WTC11 (cell line): ENCODE measurements at regions of chr15 and their contacts with region 1.

Region 1: DNA sequence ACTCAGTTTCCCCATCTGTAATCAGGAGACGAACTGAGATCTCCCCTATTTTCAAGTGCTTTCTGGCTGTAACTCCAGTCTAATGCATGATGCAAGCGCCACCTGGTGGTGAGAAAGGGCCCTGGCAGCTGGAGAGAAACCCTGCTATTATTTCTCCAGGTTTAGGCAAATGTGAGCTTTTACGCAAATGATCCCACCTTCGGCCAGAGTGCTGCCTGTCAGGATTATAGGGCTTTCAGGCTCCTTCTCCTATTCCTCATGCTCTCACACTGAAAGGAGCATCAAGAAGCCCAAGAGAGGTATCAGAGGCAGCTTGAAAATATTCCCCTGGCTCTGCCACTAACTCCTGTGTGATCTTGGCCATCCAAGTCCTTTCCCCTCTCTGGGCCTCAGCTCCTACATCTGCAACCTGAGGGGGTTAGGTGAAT is 93.9 kb upstream of the RASGRF1 start:
- DNase-seq: peak; percentile 80
- ATAC-seq: peak; percentile 75
- H3K4me3 Mint-ChIP-seq: no peak overlapping the region
- H3K27ac Mint-ChIP-seq: no peak overlapping the region
- H3K4me1 Mint-ChIP-seq: peaks cover 4% of the 10 kb centered on the region
- H3K27me3 Mint-ChIP-seq: peaks cover 12% of the 10 kb centered on the region
- CTCF ChIP-seq: peak; percentile 90

Region 2: DNA sequence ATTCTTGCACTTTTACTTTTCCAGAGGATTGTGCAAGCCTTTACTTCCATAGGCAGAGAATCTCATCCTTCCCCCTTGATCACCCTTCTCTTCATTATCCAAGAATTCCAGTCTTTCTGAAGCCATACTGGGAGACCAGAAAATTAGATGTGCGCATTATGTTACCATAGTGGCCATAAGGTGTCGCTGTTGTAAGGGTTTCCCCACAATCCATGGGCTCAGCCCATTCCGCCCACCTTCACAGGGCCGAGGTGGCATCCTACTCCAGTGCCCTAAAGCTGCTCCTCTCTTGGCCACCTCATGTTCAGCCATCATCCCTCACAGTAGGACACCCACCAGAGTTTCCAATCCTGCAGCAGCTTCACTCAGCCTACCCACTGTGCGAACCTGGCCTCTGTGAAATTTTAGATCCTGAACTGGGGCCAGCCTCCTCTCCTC is 274.7 kb before region 1 on chr15:
- CTCF ChIA-PET with region 1: interaction called, 23 read pairs
- POLR2A ChIA-PET with region 1: no interaction called
- DNase-seq: peak; percentile 65
- ATAC-seq: peak; percentile 79
- H3K4me3 Mint-ChIP-seq: no peak overlapping the region
- H3K27ac Mint-ChIP-seq: peak overlapping the region; percentile 89
- H3K4me1 Mint-ChIP-seq: peaks cover 26% of the 10 kb centered on the region
- H3K27me3 Mint-ChIP-seq: no peaks in the 10 kb centered on the region
- CTCF ChIP-seq: peak; percentile 70

Region 3: GRCh38 chr15:78968539-78969271 is 215.8 kb before region 1 on chr15:
- CTCF ChIA-PET with region 1: no interaction called
- POLR2A ChIA-PET with region 1: no interaction called
- DNase-seq: no peak
- ATAC-seq: no peak
- H3K4me3 Mint-ChIP-seq: peak overlapping the region; percentile 45
- H3K27ac Mint-ChIP-seq: peak overlapping the region; percentile 94
- H3K4me1 Mint-ChIP-seq: peaks cover 44% of the 10 kb centered on the region
- H3K27me3 Mint-ChIP-seq: no peaks in the 10 kb centered on the region
- CTCF ChIP-seq: no peak

Region 4: DNA sequence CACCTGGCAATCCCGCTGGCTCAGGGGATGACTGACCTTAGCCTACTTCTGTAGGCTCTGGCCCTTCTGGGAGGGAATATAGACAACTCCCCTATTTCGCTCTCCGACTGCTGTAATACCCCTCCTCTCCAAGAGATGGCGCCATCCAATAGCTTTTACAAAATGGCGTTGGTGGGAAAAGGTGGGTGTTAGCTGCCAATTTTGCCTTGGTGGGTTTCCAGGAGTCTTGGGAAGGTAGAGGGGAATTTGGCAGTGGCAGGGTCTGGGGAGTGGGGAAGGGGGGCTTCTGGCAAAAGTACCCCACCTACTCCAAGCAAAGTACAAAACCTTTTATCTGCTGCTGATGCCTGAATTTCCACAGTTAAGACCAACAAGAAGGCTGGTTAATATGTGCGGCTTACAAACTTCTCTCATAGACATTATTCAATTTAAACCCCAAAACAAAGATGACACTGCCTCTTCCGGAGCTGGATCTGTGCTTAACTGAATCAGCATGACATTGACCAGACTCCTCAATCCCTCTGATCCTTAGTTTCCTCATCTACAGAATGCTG is 156.0 kb before region 1 on chr15:
- CTCF ChIA-PET with region 1: interaction called, 276 read pairs
- POLR2A ChIA-PET with region 1: interaction called, 3 read pairs
- DNase-seq: peak; percentile 75
- ATAC-seq: peak; percentile 65
- H3K4me3 Mint-ChIP-seq: no peak overlapping the region
- H3K27ac Mint-ChIP-seq: no peak overlapping the region
- H3K4me1 Mint-ChIP-seq: peaks cover 11% of the 10 kb centered on the region
- H3K27me3 Mint-ChIP-seq: no peaks in the 10 kb centered on the region; the same call in 1 of the 2 replicates
- CTCF ChIP-seq: peak; percentile 95

Region 5: GRCh38 chr15:79091204-79091867 is 93.1 kb before region 1 on chr15:
- CTCF ChIA-PET with region 1: interaction called, 38 read pairs
- POLR2A ChIA-PET with region 1: no interaction called
- DNase-seq: peak; percentile 51
- ATAC-seq: peak; percentile 31
- H3K4me3 Mint-ChIP-seq: peak overlapping the region; percentile 89
- H3K27ac Mint-ChIP-seq: no peak overlapping the region
- H3K4me1 Mint-ChIP-seq: peaks cover 11% of the 10 kb centered on the region
- H3K27me3 Mint-ChIP-seq: peaks cover 99% of the 10 kb centered on the region
- CTCF ChIP-seq: no peak

Region 6: GRCh38 chr15:79157631-79158592 is 26.6 kb before region 1 on chr15:
- CTCF ChIA-PET with region 1: interaction called, 12 read pairs
- POLR2A ChIA-PET with region 1: no interaction called
- DNase-seq: no peak
- ATAC-seq: no peak
- H3K4me3 Mint-ChIP-seq: no peak overlapping the region
- H3K27ac Mint-ChIP-seq: no peak overlapping the region
- H3K4me1 Mint-ChIP-seq: peaks cover 10% of the 10 kb centered on the region
- H3K27me3 Mint-ChIP-seq: peaks cover 4% of the 10 kb centered on the region; the same call in 1 of the 2 replicates
- CTCF ChIP-seq: no peak

Region 7: DNA sequence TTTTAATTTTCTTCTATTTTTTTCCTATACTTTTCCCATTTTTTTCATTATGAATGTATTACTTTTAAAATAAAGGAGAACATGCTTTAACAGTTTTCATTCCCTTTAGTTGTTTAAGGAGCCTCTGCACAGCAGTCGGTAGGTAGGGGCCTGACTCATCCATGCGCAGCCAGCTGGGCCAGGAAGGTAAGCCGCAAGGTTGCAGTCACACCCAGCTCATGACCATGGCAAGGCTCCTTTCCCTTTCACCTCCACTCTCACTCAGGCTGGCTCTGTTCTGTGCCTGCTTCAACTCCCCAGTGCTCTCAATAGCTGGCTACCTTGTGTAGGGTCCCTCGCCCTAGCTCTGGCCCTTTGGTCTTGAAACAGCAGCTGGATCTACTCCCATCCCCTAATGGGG is 80.7 kb after region 1 on chr15:
- CTCF ChIA-PET with region 1: interaction called, 11 read pairs
- POLR2A ChIA-PET with region 1: no interaction called
- DNase-seq: no peak
- ATAC-seq: peak; percentile 48; the same call in 1 of the 2 replicates
- H3K4me3 Mint-ChIP-seq: no peak overlapping the region
- H3K27ac Mint-ChIP-seq: no peak overlapping the region
- H3K4me1 Mint-ChIP-seq: peaks cover 4% of the 10 kb centered on the region; the same call in 1 of the 2 replicates
- H3K27me3 Mint-ChIP-seq: peaks cover 3% of the 10 kb centered on the region; the same call in 1 of the 2 replicates
- CTCF ChIP-seq: no peak

Region 8: DNA sequence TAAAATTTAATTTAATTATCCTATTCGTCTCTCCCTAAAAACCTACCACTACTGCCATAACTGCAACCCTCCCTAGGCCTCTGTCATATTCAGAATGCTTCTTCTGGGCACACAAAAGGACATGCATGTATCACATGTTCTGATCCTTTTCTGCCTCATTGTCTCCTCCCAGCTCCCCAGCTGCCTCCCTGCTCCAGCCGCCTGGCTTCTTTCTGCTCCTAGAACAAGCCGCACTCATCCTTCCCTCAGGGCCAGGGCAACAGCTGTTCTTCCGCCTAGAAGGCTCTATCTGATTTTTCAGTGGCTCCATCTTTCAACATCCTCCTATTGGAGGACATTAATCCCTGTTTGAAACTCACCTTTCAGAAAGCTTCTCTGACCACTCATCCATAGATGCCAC is 165.0 kb after region 1 on chr15:
- CTCF ChIA-PET with region 1: no interaction called
- POLR2A ChIA-PET with region 1: no interaction called
- DNase-seq: no peak
- ATAC-seq: no peak
- H3K4me3 Mint-ChIP-seq: no peak overlapping the region
- H3K27ac Mint-ChIP-seq: no peak overlapping the region
- H3K4me1 Mint-ChIP-seq: no peaks in the 10 kb centered on the region
- H3K27me3 Mint-ChIP-seq: no peaks in the 10 kb centered on the region
- CTCF ChIP-seq: no peak